B cell (primary cell): ENCODE measurements at regions of chr19 and their contacts with region 1.

Region 1: DNA sequence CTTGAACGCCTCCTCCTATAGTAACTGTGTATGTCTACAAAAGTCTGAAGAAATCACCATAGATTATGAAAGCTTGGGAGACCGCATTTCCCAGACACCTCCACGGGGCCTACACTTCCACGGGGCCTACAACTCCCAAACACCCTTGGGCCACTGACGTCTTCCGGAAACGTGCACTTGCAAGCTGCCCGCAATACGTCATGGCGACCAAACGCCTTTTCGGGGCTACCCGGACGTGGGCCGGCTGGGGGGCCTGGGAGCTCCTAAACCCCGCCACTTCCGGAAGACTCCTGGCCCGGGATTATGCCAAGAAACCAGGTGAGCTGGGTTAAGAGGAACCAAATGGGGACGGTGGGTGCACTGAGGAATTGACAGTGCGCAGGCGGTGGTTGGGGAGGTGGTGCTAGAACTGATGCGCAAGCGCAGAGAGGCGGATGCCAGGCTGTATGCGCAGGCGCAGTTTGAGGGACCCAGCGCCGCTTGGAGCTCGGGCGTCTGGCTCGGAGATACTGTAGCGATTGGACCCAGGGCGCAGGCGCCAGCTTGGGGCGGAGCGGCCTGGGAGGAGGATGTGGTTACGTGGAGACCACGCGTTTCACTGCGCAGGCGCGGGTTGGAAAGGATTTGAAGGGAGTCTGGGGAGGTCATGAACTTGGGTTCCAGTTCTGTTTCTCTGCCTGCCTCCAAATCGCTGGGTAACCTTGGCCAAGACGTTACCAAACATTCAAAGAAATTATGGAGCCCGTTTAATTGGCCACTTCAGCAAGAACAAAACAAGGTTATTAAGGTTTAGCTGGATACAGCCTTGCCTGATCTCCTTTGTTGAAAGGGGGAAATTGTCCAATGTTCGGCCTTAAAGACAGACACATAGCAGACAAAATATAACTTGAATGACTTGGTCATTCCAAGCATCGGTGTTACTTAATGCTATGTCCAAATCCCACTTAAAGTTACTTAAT is at the start of gene MRPL54:
- DNase-seq: peak; percentile 100
- ATAC-seq: peak; percentile 78
- H3K4me3 ChIP-seq: peak within 1 kb of the TSS; percentile 49 to 99 (median 97)
- H3K4me3 Mint-ChIP-seq: peak within 1 kb of the TSS; percentile 99
- H3K27ac ChIP-seq: peak within 1 kb of the TSS; percentile 100
- H3K27ac Mint-ChIP-seq: peak within 1 kb of the TSS; percentile 100
- H3K4me1 ChIP-seq: peaks cover 25 to 35% of the 10 kb centered on the region in 2 donors
- H3K4me1 Mint-ChIP-seq: peaks cover 37% of the 10 kb centered on the region
- H3K27me3 ChIP-seq: no peaks in the 10 kb centered on the region
- H3K27me3 Mint-ChIP-seq: no peaks in the 10 kb centered on the region
- CTCF ChIP-seq: no peak
- total RNA-seq, gene MRPL54: 48.6 and 54.3 TPM in 2 replicates

Region 2: GRCh38 chr19:3557461-3558248 is 205.1 kb before region 1 on chr19 and contains the start of gene MFSD12:
- CTCF ChIA-PET with region 1: no interaction called
- POLR2A ChIA-PET with region 1: no interaction called
- intact Hi-C with region 1: loop called (anchors 5 kb)
- DNase-seq: peak; percentile 95
- ATAC-seq: peak; percentile 88
- H3K4me3 ChIP-seq: peak within 1 kb of the TSS; percentile 36 to 87 (median 72)
- H3K4me3 Mint-ChIP-seq: peak within 1 kb of the TSS; percentile 99
- H3K27ac ChIP-seq: peak within 1 kb of the TSS; percentile 48 to 87
- H3K27ac Mint-ChIP-seq: peak within 1 kb of the TSS; percentile 94
- H3K4me1 ChIP-seq: peaks cover 42 to 60% of the 10 kb centered on the region in 2 donors
- H3K4me1 Mint-ChIP-seq: peaks cover 43% of the 10 kb centered on the region
- H3K27me3 ChIP-seq: no peaks in the 10 kb centered on the region
- H3K27me3 Mint-ChIP-seq: no peaks in the 10 kb centered on the region
- CTCF ChIP-seq: no peak
- total RNA-seq, gene MFSD12: 99.6 and 100 TPM in 2 replicates

Region 3: GRCh38 chr19:3626473-3627350 is 136.1 kb before region 1 on chr19 and contains the start of gene CACTIN:
- CTCF ChIA-PET with region 1: no interaction called
- POLR2A ChIA-PET with region 1: no interaction called
- intact Hi-C with region 1: loop called (anchors 1 kb)
- DNase-seq: peak; percentile 99
- ATAC-seq: peak; percentile 98
- H3K4me3 ChIP-seq: peak within 1 kb of the TSS; percentile 70 to 98 (median 76)
- H3K4me3 Mint-ChIP-seq: peak within 1 kb of the TSS; percentile 96
- H3K27ac ChIP-seq: peak within 1 kb of the TSS; percentile 96 to 98
- H3K27ac Mint-ChIP-seq: peak within 1 kb of the TSS; percentile 100
- H3K4me1 ChIP-seq: peaks cover 17 to 21% of the 10 kb centered on the region in 2 donors
- H3K4me1 Mint-ChIP-seq: peaks cover 26% of the 10 kb centered on the region
- H3K27me3 ChIP-seq: no peaks in the 10 kb centered on the region
- H3K27me3 Mint-ChIP-seq: no peaks in the 10 kb centered on the region
- CTCF ChIP-seq: no peak
- total RNA-seq, gene CACTIN: 41.8 and 48.0 TPM in 2 replicates

Region 4: DNA sequence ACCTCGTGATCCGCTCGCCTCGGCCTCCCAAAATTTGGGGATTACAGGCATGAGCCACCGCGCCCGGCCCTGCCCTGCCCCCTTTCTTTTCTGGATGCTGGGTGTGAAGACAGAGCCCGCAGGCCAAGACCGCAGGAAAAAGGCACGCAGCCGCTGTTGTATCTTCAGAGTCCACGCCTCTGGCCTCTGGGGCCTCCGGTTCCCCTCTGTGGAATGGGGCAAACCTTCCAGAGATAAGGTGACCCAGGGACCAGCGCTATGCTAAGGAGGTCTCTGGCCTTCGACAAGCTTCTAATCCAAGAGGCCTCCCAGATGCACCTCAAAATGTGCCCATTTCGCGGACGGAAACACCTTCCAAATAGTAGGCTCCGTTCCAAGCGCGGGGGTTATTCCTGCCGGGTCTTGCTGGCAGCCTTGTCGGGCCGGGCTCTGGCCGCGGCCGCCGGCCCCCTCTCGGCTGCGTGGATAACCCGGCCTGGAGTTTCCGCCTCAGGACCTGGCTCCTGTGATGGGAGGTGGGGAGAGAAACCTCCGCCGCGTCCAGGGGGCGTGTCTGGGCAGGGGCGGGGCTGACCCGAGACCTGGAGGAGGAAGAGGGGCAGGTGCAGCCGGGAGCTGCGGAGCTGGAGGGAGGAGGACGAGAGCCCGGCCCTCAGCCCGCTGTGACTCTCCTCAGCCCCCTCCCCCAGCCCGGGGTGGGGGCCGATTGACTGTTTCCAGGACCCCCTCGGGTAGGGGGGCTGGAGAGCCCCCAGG is 41.5 kb before region 1 on chr19:
- CTCF ChIA-PET with region 1: interaction called, 3 read pairs
- POLR2A ChIA-PET with region 1: no interaction called
- intact Hi-C with region 1: loop called (anchors 1 kb)
- DNase-seq: peak; percentile 87
- ATAC-seq: peak; percentile 97
- H3K4me3 ChIP-seq: peak overlapping the region in 4 of 5 experiments; percentile 34 to 53 (median 48)
- H3K4me3 Mint-ChIP-seq: peak overlapping the region; percentile 73
- H3K27ac ChIP-seq: no peak overlapping the region
- H3K27ac Mint-ChIP-seq: no peak overlapping the region
- H3K4me1 ChIP-seq: peaks cover 16 to 20% of the 10 kb centered on the region in 2 donors
- H3K4me1 Mint-ChIP-seq: peaks cover 11% of the 10 kb centered on the region
- H3K27me3 ChIP-seq: peaks cover 0 to 42% (median 21%) of the 10 kb centered on the region in 4 experiments
- H3K27me3 Mint-ChIP-seq: peaks cover 21% of the 10 kb centered on the region
- CTCF ChIP-seq: no peak

Region 5: DNA sequence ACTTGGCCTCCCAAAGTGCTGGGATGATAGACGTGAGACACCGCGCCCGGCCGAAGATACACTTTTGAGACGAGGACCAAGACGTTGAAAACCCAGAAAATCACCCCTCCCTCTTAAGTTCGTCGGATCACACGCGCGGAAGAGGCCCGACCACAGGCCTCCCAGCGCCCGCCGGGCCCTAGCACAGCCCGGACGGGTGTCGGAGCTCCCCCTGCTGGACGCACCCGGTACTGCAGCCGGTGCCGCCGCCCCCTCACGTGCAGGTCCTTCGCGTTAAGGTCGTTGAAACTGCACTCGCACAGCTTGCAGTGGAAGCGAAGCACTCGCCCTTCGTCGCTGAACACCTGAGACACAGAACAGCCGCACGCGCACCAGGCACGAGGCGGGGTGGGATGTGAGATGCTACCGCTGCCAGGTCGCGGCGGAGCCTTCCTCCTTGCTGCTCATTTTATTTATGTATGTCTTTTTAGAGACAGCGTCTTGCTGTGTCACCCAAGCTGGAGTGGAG is 59.1 kb after region 1 on chr19:
- CTCF ChIA-PET with region 1: interaction called, 15 read pairs
- POLR2A ChIA-PET with region 1: interaction called, 3 read pairs
- intact Hi-C with region 1: loop called (anchors 1 kb)
- DNase-seq: peak; percentile 88
- ATAC-seq: peak; percentile 94
- H3K4me3 ChIP-seq: no peak overlapping the region
- H3K4me3 Mint-ChIP-seq: peak overlapping the region; percentile 23
- H3K27ac ChIP-seq: no peak overlapping the region
- H3K27ac Mint-ChIP-seq: peak overlapping the region; percentile 15
- H3K4me1 ChIP-seq: peaks cover 6 to 16% of the 10 kb centered on the region in 2 donors
- H3K4me1 Mint-ChIP-seq: peaks cover 13% of the 10 kb centered on the region
- H3K27me3 ChIP-seq: peaks cover 0 to 4% (median 0%) of the 10 kb centered on the region in 4 experiments
- H3K27me3 Mint-ChIP-seq: peaks cover 3% of the 10 kb centered on the region
- CTCF ChIP-seq: peak; percentile 99

Region 6: DNA sequence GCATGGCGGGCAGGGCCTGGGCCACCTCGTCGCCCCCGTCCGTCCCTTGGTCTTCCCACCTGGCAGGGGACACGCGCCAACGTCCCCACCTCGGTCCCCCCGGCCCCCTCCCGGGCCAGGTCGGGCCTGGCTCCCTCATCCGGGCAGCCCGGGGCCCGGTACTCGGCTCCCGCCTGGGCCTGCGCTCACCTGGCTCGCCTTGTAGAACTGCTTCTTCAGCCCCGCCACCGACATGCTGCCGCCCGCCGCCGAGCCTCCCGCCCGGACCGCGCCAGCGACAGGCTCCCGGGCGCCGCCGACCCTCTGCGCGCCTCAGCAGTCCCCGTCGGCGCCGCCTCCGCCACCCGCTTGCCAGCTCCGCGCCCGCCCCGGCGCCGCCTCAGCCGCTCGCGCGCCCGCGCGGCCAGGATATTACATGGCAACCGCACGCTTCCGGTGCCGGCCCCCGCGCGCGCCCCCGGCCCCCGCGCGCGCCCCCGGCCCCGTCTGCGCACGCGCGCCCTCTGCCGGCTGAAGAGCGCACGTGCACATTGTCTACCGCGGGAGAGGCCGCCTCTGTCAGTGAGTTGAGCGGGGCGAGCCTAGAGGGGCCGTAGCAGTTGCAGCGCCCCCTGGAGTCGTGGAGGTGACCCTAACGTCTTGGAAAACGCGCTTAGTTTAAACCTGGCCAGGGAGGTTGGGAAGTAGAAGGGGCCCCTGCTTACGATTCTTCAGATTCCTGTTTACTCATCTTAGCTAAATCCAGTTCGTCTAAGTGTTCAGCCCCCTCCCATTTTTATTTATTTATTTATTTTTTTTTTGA is 637.6 kb after region 1 on chr19 and contains the start of gene SH3GL1:
- CTCF ChIA-PET with region 1: no interaction called
- POLR2A ChIA-PET with region 1: no interaction called
- intact Hi-C with region 1: loop called (anchors 5 kb)
- DNase-seq: peak; percentile 96
- ATAC-seq: peak; percentile 68
- H3K4me3 ChIP-seq: peak within 1 kb of the TSS; percentile 85 to 99 (median 88)
- H3K4me3 Mint-ChIP-seq: peak within 1 kb of the TSS; percentile 85
- H3K27ac ChIP-seq: peak within 1 kb of the TSS; percentile 49 to 97
- H3K27ac Mint-ChIP-seq: peak within 1 kb of the TSS; percentile 88
- H3K4me1 ChIP-seq: peaks cover 29 to 44% of the 10 kb centered on the region in 2 donors
- H3K4me1 Mint-ChIP-seq: peaks cover 53% of the 10 kb centered on the region
- H3K27me3 ChIP-seq: no peaks in the 10 kb centered on the region
- H3K27me3 Mint-ChIP-seq: no peaks in the 10 kb centered on the region
- CTCF ChIP-seq: peak; percentile 77
- total RNA-seq, gene SH3GL1: 37.2 and 41.9 TPM in 2 replicates

Region 7: GRCh38 chr19:5690125-5690954 is 1927.6 kb after region 1 on chr19 and contains the start of gene RPL36:
- CTCF ChIA-PET with region 1: no interaction called
- POLR2A ChIA-PET with region 1: interaction called, 3 read pairs
- intact Hi-C with region 1: loop called (anchors 10 kb)
- DNase-seq: peak; percentile 99
- ATAC-seq: peak; percentile 52
- H3K4me3 ChIP-seq: peak within 1 kb of the TSS; percentile 27 to 98 (median 93)
- H3K4me3 Mint-ChIP-seq: peak within 1 kb of the TSS; percentile 94
- H3K27ac ChIP-seq: peak within 1 kb of the TSS; percentile 88 to 89
- H3K27ac Mint-ChIP-seq: peak within 1 kb of the TSS; percentile 93
- H3K4me1 ChIP-seq: peaks cover 14 to 39% of the 10 kb centered on the region in 2 donors
- H3K4me1 Mint-ChIP-seq: peaks cover 43% of the 10 kb centered on the region
- H3K27me3 ChIP-seq: no peaks in the 10 kb centered on the region
- H3K27me3 Mint-ChIP-seq: no peaks in the 10 kb centered on the region
- CTCF ChIP-seq: peak; percentile 94
- total RNA-seq, gene RPL36: 895 and 983 TPM in 2 replicates